Activated CD4-positive, alpha-beta T cell treated with anti-CD3 and anti-CD28 coated beads, Interleukin-2, amount 10 ng/mL, durations not matched to agents 24 days and 14 days (primary cell): ENCODE measurements at regions of chr13 and their contacts with region 1.

Region 1: GRCh38 chr13:60163478-60164233 is at the start of gene DIAPH3:
- DNase-seq: peak; percentile 99
- H3K4me3 Mint-ChIP-seq: peak within 1 kb of the TSS; percentile 92
- H3K27ac Mint-ChIP-seq: peak within 1 kb of the TSS; percentile 90
- H3K4me1 Mint-ChIP-seq: peaks cover 31% of the 10 kb centered on the region
- H3K27me3 Mint-ChIP-seq: no peaks in the 10 kb centered on the region
- total RNA-seq, gene DIAPH3: 26.3 and 26.6 TPM in 2 replicates

Region 2: DNA sequence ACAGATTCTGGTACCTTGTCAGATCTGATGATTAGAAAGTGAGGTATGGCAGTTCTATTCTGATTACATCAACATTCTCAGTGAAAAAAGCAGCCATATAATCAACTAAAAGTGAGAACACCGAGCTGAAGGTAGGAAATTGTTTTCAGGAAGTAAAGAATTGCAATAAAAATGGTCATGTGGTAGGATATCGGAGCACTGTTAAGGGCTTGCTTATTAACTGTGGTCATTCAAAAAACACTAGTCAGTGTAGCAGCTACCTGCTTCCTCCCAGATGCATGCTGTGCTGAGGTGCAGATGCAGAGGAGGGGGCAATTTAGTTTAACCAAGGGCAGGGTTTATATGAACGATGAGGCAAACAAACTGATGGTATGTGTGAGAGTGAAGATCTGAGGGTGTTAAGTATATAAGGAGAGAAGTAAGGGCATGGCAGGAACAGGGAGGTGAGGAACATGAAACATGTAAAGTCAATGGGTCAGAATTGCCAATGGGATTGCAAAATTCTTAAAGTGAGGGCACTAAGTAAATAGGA is 111.8 kb before region 1 on chr13:
- intact Hi-C with region 1: no loop called
- DNase-seq: no peak
- H3K4me3 Mint-ChIP-seq: no peak overlapping the region
- H3K27ac Mint-ChIP-seq: no peak overlapping the region
- H3K4me1 Mint-ChIP-seq: peaks cover 3% of the 10 kb centered on the region
- H3K27me3 Mint-ChIP-seq: no peaks in the 10 kb centered on the region

Region 3: DNA sequence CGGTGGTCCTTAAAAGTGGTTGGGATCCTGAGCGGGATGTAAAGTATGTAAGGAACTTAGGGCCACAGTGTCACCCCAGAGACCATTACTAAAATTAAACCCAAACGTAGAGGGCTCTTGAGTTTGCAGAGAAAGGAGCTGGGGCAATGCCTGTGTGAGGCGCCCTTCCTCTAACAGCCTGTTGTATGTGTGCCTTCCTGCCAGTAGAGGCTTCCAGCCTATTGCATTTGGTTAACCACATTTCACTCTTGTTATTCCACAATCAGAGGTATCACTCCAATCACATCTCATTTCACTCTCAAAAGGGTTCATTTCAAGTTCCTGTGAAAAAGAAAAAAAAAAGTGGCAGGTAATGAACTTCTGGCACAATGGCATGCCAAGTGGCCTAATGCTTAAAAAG is 29.3 kb before region 1 on chr13:
- intact Hi-C with region 1: loop called (anchors 2 kb)
- DNase-seq: peak; percentile 59
- H3K4me3 Mint-ChIP-seq: no peak overlapping the region
- H3K27ac Mint-ChIP-seq: no peak overlapping the region
- H3K4me1 Mint-ChIP-seq: peaks cover 13% of the 10 kb centered on the region
- H3K27me3 Mint-ChIP-seq: no peaks in the 10 kb centered on the region

Region 4: DNA sequence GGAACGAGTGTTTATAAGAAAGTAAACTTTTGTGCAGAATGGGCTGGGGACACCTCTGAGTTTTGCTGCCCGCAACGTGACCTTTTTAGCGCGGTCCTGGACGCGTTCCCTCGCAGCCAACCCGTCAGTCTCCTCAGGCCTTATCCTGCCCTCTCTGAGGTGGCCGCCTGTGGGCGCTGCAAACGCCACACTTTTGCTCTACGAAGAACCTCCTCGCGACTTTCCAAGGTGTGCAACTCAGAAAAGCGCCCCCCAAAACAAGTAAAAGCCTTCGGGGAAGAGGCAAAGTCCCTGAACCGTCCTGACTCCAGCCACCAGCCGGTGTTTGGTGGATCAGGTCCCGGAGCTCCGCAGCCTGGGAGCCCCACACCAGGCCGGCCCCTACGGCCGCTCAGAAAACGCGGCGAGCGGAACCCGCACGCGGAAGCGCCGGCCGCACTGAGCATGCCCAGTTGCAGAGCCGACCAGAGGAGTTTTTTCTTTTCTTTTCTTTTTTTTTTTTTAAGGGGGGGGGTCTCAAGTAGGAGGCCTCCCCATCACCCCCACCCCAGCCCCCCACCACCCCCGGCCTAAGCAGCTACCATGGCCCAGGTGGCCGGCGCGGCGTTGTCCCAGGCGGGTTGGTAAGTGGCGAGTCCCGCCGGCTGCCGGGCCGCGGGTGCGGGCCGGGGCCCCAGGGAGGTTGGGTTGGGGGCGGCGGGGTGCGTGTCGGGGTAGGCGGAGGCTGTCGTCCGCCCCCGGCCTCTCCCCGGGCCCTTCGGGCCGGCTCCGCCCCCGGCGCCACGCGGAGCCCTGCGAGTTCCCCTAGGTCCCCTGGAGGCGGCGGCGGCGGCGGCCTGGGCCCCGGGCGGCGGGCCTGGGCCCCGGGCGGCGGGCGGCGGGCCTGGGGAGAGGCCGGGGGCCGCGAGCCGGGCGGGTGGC is 233.4 kb after region 1 on chr13 and contains the start of gene TDRD3:
- intact Hi-C with region 1: loop called (anchors 1 kb)
- DNase-seq: peak; percentile 93
- H3K4me3 Mint-ChIP-seq: peak within 1 kb of the TSS; percentile 97
- H3K27ac Mint-ChIP-seq: peak within 1 kb of the TSS; percentile 98
- H3K4me1 Mint-ChIP-seq: peaks cover 36% of the 10 kb centered on the region
- H3K27me3 Mint-ChIP-seq: no peaks in the 10 kb centered on the region
- total RNA-seq, gene TDRD3: 19.4 and 19.7 TPM in 2 replicates